ENCODE measurements at regions of chr10 and their contacts with region 1.

Region 1: GRCh38 chr10:68301790-68302502 is 29.9 kb upstream of the HNRNPH3 start:
- DNase-seq: peak; percentile 9 to 80
- H3K4me3 ChIP-seq: no peak overlapping the region
- H3K27ac ChIP-seq: no peak overlapping the region
- H3K4me1 ChIP-seq: peaks cover 14% of the 10 kb centered on the region
- H3K27me3 ChIP-seq: no peaks in the 10 kb centered on the region
- CTCF ChIP-seq: peak; percentile 81

Region 2: DNA sequence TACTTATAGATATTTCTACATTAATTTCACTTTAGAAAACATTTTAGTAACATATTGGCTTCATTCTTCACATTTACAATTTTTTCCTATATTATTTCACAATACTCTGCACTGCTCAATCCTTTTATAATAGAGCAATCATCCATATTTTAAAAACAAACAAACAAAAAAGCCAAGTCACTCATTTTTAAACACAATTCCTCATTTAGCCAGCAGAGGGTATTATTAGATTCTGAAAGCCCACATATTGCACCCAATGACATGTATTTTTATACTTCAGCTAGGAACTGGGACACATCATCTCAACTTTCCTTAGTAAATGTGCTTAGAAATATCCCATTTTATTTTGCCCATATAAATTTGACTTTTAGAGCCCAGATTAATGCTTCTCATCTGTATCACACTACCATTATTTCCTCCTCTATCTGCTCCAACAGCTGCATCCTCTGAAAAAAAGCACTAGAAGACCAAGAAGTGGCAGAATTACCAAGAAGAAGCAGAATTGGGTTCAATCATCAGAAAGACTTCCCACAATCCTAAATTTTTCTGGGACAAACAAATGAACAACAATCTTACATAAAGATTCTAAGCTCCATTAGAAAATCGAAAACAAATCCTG is 635.4 kb before region 1 on chr10:
- CTCF ChIA-PET with region 1: no interaction called
- POLR2A ChIA-PET with region 1: no interaction called
- intact Hi-C with region 1: loop called (anchors 5 kb)
- DNase-seq: no peak
- H3K4me3 ChIP-seq: no peak overlapping the region
- H3K27ac ChIP-seq: no peak overlapping the region
- H3K4me1 ChIP-seq: no peaks in the 10 kb centered on the region
- H3K27me3 ChIP-seq: no peaks in the 10 kb centered on the region
- CTCF ChIP-seq: peak; percentile 74

Region 3: GRCh38 chr10:67788025-67788886 is 513.7 kb before region 1 on chr10:
- CTCF ChIA-PET with region 1: interaction called, 3 read pairs
- POLR2A ChIA-PET with region 1: no interaction called
- intact Hi-C with region 1: loop called (anchors 2 kb)
- DNase-seq: peak in 1 of 2 experiments; percentile 57
- H3K4me3 ChIP-seq: no peak overlapping the region
- H3K27ac ChIP-seq: no peak overlapping the region
- H3K4me1 ChIP-seq: peaks cover 15% of the 10 kb centered on the region; the same call in 1 of the 2 replicates
- H3K27me3 ChIP-seq: no peaks in the 10 kb centered on the region
- CTCF ChIP-seq: peak; percentile 73

Region 4: GRCh38 chr10:67943909-67944308 is 358.0 kb before region 1 on chr10:
- CTCF ChIA-PET with region 1: no interaction called
- POLR2A ChIA-PET with region 1: no interaction called
- intact Hi-C with region 1: no loop called
- DNase-seq: no peak
- H3K4me3 ChIP-seq: no peak overlapping the region
- H3K27ac ChIP-seq: no peak overlapping the region
- H3K4me1 ChIP-seq: no peaks in the 10 kb centered on the region
- H3K27me3 ChIP-seq: no peaks in the 10 kb centered on the region
- CTCF ChIP-seq: no peak

Region 5: GRCh38 chr10:68156373-68157185 is 145.4 kb before region 1 on chr10:
- CTCF ChIA-PET with region 1: interaction called, 7 read pairs
- POLR2A ChIA-PET with region 1: interaction called, 24 read pairs
- intact Hi-C with region 1: no loop called
- DNase-seq: peak; percentile 36 to 40
- H3K4me3 ChIP-seq: no peak overlapping the region
- H3K27ac ChIP-seq: no peak overlapping the region
- H3K4me1 ChIP-seq: peaks cover 62% of the 10 kb centered on the region
- H3K27me3 ChIP-seq: no peaks in the 10 kb centered on the region
- CTCF ChIP-seq: peak; percentile 76

Region 6: GRCh38 chr10:68196701-68197100 is 105.2 kb before region 1 on chr10:
- CTCF ChIA-PET with region 1: no interaction called
- POLR2A ChIA-PET with region 1: no interaction called
- intact Hi-C with region 1: no loop called
- DNase-seq: no peak
- H3K4me3 ChIP-seq: no peak overlapping the region
- H3K27ac ChIP-seq: no peak overlapping the region
- H3K4me1 ChIP-seq: peaks cover 8% of the 10 kb centered on the region; the same call in 1 of the 2 replicates
- H3K27me3 ChIP-seq: no peaks in the 10 kb centered on the region
- CTCF ChIP-seq: no peak

Region 7: GRCh38 chr10:68261132-68261856 is 40.7 kb before region 1 on chr10:
- CTCF ChIA-PET with region 1: no interaction called
- POLR2A ChIA-PET with region 1: interaction called, 15 read pairs
- intact Hi-C with region 1: no loop called
- DNase-seq: no peak
- H3K4me3 ChIP-seq: no peak overlapping the region
- H3K27ac ChIP-seq: no peak overlapping the region
- H3K4me1 ChIP-seq: no peaks in the 10 kb centered on the region
- H3K27me3 ChIP-seq: no peaks in the 10 kb centered on the region
- CTCF ChIP-seq: no peak

Measured in PC-9 (cell line).